Activated T-helper 1 cell treated with anti-CD3 and anti-CD28 coated beads, Interleukin-12 subunit alpha, Interleukin-12 subunit beta, Interleukin-2, Interleukin-4 antibody, amounts not matched to agents 30 ng/mL and 10 ng/mL and 1 ng/mL, durations not matched to agents 14 hours and 24 hours and 36 hours (primary cell): ENCODE measurements at regions of chr11 and their contacts with region 1.

Region 1: GRCh38 chr11:62880803-62881578 is at the start of gene SLC3A2:
- DNase-seq: peak; percentile 83
- H3K4me3 Mint-ChIP-seq: peak within 1 kb of the TSS; percentile 99
- H3K27ac Mint-ChIP-seq: peak within 1 kb of the TSS; percentile 100
- H3K4me1 Mint-ChIP-seq: peaks cover 52% of the 10 kb centered on the region
- H3K27me3 Mint-ChIP-seq: peaks cover 2% of the 10 kb centered on the region
- total RNA-seq, gene SLC3A2: 397 and 399 TPM in 2 replicates

Region 2: GRCh38 chr11:62545437-62546243 is 335.4 kb before region 1 on chr11:
- intact Hi-C with region 1: no loop called
- DNase-seq: peak; percentile 47
- H3K4me3 Mint-ChIP-seq: peak overlapping the region; percentile 97
- H3K27ac Mint-ChIP-seq: peak overlapping the region; percentile 95
- H3K4me1 Mint-ChIP-seq: peaks cover 71% of the 10 kb centered on the region
- H3K27me3 Mint-ChIP-seq: peaks cover 15% of the 10 kb centered on the region

Region 3: GRCh38 chr11:62573592-62574362 is 307.2 kb before region 1 on chr11 and contains the start of gene EEF1G:
- intact Hi-C with region 1: loop called (anchors 5 kb)
- DNase-seq: peak; percentile 99
- H3K4me3 Mint-ChIP-seq: peak within 1 kb of the TSS; percentile 98
- H3K27ac Mint-ChIP-seq: peak within 1 kb of the TSS; percentile 92
- H3K4me1 Mint-ChIP-seq: peaks cover 37% of the 10 kb centered on the region
- H3K27me3 Mint-ChIP-seq: no peaks in the 10 kb centered on the region
- total RNA-seq, gene EEF1G: 1,154 and 1,169 TPM in 2 replicates

Region 4: DNA sequence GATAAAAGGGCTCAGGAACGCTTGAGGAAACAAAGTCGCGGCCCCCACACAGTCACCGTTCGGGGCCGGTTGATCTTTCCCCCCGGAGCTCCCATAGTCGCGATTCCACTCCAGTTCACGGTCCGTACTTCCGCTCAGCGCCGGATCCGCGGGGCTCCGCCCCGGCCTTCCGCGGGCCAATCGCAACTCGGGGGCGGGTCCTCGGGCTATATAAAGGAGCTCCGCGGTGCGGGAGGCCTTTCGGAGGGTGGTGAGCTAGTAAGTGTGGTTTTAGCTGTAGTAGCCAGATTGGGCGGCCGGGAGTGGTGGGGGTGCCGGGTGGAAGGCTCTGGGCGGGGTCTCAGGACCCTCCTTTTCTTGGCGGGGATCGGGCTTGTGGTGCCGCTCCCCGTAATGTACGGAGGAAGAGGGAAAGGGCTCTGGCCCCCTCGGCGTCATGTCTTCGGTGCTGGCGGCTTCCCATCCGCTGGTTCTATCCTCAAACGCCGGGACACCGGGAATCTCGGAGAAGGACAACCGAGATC is 215.9 kb before region 1 on chr11 and contains the starts of genes C11orf98 and CSKMT:
- intact Hi-C with region 1: loop called (anchors 2 kb)
- DNase-seq: peak; percentile 97
- H3K4me3 Mint-ChIP-seq: peak within 1 kb of the TSS; percentile 98
- H3K27ac Mint-ChIP-seq: peak within 1 kb of the TSS; percentile 81
- H3K4me1 Mint-ChIP-seq: peaks cover 33% of the 10 kb centered on the region
- H3K27me3 Mint-ChIP-seq: no peaks in the 10 kb centered on the region
- total RNA-seq, gene C11orf98: 146 and 151 TPM in 2 replicates
- total RNA-seq, gene CSKMT: 65.0 and 69.4 TPM in 2 replicates

Region 5: GRCh38 chr11:62771144-62772021 is 109.6 kb before region 1 on chr11 and contains the start of gene TAF6L:
- intact Hi-C with region 1: loop called (anchors 1 kb)
- DNase-seq: peak; percentile 91
- H3K4me3 Mint-ChIP-seq: peak within 1 kb of the TSS; percentile 89
- H3K27ac Mint-ChIP-seq: peak within 1 kb of the TSS; percentile 91
- H3K4me1 Mint-ChIP-seq: peaks cover 30% of the 10 kb centered on the region
- H3K27me3 Mint-ChIP-seq: no peaks in the 10 kb centered on the region
- total RNA-seq, gene TAF6L: 19.4 and 20.7 TPM in 2 replicates

Region 6: GRCh38 chr11:62805076-62805892 is 75.7 kb before region 1 on chr11 and contains the start of gene NXF1:
- intact Hi-C with region 1: loop called (anchors 1 kb)
- DNase-seq: peak; percentile 95
- H3K4me3 Mint-ChIP-seq: peak within 1 kb of the TSS; percentile 100
- H3K27ac Mint-ChIP-seq: peak within 1 kb of the TSS; percentile 99
- H3K4me1 Mint-ChIP-seq: peaks cover 40% of the 10 kb centered on the region
- H3K27me3 Mint-ChIP-seq: peaks cover 2% of the 10 kb centered on the region
- total RNA-seq, gene NXF1: 155 and 158 TPM in 2 replicates

Region 7: DNA sequence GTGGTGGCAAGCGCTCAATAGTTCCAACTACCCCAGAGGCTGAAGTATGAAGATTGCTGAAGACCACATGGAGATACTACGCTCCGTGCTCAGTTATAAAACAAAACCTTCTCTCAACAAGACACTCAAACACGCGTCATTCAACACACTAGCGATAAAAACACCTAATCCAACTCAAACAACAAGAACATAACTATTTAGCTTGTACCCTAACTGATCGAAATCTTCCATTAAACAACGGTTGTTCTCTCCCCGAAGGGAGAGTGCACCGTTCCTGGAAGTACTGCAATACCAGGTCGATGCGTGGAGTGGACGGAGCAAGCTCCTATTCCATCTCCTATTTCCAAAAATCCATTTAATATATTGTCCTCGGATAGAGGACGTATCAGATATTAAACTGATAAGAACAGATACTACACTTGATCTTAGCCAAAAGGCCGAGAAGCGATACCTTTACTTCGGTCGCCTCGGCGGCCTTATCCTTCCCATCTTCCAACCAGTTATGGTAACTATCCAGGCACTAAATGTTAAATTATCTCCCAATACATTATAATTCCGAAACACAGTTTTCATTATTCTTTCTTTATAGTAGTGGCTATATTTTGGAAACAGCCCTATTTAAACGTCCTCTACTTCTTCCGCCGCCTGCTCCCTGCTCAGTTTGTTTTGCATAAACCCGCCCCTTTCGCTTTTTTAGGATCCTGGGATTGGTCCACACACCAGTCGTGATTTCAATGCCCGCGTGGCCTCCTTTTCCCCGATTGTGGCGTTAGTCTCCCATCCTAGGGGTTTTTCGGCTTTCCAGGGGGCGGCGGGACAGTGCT is 39.4 kb before region 1 on chr11:
- intact Hi-C with region 1: loop called (anchors 1 kb)
- DNase-seq: peak; percentile 83
- H3K4me3 Mint-ChIP-seq: no peak overlapping the region
- H3K27ac Mint-ChIP-seq: no peak overlapping the region
- H3K4me1 Mint-ChIP-seq: peaks cover 18% of the 10 kb centered on the region
- H3K27me3 Mint-ChIP-seq: no peaks in the 10 kb centered on the region